ENCODE measurements at regions of chr1 and their contacts with region 1.

Region 1: DNA sequence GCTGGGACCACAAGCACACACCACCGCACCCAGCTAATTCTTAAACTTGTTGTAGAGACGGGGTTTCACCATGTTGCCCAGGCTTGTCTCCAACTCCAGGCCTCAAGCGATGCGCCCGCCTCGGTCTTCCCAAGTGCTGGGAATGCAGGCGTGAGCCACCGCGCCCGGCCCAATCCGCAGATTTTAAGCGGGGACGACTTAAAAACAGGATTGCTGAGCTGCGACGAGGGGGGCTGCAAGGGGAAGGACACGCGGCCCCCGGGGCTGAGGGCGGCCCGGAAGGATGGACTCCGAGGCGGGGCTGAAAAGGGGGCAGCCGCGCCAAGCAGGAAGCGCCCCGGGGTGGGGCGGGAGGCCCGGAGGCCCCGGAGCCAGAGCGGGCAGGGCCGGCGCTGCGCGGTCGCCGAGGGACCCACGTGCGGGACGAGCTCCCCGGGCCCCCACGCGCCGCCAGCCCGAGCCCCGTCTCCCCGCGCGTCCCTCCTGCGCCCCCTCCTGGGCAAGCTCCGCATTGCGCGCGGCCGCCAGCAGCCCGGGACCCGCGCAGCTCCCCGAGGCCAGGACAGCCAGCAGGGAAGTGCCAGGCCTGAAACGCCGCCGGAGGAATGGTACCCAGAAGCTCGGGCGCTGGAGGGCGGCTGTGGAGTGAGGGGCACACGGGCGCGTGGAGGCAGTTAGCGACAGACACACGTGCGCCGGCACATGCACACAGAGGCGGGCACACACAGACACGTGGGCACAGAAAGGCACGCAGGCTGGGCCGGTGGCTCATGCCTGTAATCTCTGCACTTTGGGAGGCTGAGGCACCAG is 5.5 kb upstream of the PRKCZ start:
- DNase-seq: peak; percentile 77
- H3K4me3 Mint-ChIP-seq: no peak overlapping the region
- H3K27ac Mint-ChIP-seq: no peak overlapping the region
- H3K4me1 Mint-ChIP-seq: peaks cover 20% of the 10 kb centered on the region
- H3K27me3 Mint-ChIP-seq: peaks cover 23% of the 10 kb centered on the region

Region 2: GRCh38 chr1:1959840-1960479 is 84.8 kb before region 1 on chr1:
- CTCF ChIA-PET with region 1: interaction called, 28 read pairs
- POLR2A ChIA-PET with region 1: no interaction called
- DNase-seq: peak; percentile 73
- H3K4me3 Mint-ChIP-seq: no peak overlapping the region
- H3K27ac Mint-ChIP-seq: no peak overlapping the region
- H3K4me1 Mint-ChIP-seq: peaks cover under 1% of the 10 kb centered on the region
- H3K27me3 Mint-ChIP-seq: peaks cover 10% of the 10 kb centered on the region

Region 3: GRCh38 chr1:1972976-1973715 is 71.6 kb before region 1 on chr1:
- CTCF ChIA-PET with region 1: no interaction called
- POLR2A ChIA-PET with region 1: no interaction called
- DNase-seq: no peak
- H3K4me3 Mint-ChIP-seq: no peak overlapping the region
- H3K27ac Mint-ChIP-seq: no peak overlapping the region
- H3K4me1 Mint-ChIP-seq: no peaks in the 10 kb centered on the region
- H3K27me3 Mint-ChIP-seq: no peaks in the 10 kb centered on the region

Region 4: DNA sequence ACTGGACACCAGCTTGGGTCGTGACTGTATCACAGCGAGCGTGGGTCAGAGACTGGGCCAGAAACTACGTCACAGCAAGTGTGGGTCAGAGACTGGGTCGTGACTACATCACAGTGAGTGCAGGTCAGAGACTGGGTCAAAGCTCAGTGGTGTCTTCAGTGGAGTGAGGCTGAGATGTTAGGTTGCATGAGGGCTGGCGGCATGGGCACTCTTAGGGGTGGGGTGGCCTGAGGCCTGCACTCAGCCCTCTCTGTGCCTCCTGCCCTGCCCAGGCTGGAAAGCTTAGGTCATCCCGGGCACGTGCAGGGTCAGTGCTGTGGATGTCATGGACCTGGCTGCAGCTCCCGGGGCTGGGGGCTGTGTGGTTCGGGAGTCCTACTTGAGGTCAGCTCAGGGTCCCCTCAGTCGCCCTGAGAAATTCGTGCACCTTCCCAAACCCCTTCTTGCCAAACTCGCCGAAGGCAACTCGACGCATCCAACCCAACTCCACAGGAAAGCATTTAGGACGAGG is 60.1 kb before region 1 on chr1:
- CTCF ChIA-PET with region 1: no interaction called
- POLR2A ChIA-PET with region 1: no interaction called
- DNase-seq: no peak
- H3K4me3 Mint-ChIP-seq: no peak overlapping the region
- H3K27ac Mint-ChIP-seq: no peak overlapping the region
- H3K4me1 Mint-ChIP-seq: no peaks in the 10 kb centered on the region
- H3K27me3 Mint-ChIP-seq: peaks cover 5% of the 10 kb centered on the region

Region 5: DNA sequence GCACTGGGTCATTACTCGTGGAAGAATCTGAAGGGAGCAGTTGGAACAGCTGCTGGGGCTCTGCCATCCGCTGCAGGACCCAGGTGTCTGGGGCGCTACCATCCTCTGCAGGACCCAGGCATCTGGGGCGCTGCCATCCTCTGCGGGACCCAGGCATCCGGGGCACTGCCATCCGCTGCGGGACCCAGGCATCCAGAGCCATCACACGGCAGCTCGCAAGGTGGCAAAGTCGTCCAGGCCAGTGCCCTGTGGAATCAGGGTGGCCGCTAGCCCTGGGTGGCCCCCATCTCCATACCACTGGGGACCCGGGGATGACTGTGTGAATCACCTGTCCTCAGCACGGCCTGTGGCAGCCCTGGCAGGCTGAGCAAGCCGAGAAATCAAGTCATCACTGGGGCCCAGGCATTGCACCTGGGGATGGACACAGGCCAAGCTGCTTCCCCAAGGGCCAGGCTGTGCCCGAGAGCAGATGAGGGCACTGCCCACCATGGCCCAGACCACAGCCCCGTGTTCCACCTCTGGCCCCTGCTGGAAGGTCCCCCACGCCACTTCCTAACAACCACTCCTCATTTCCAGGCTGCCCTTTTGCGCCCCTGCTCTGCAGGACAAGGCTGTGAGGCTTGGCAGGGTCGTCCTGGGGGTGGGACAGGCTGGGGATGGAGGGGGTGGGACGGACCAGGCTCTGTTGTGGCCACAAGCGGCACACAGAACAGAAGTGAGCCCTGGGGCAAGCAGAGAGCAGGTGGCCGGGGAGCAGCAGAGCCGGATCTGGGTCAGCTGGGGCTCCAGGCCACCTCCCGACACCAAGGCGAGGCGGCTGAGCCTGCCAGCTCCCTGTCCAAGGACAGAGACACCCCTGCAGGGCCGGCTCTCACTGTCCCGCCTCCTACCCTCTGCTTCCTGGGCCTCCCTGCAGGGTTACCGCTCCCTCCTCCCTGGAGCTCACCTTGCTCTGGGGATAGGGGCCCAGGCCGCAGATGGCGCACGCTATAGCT is 12.9 kb before region 1 on chr1:
- CTCF ChIA-PET with region 1: interaction called, 10 read pairs
- POLR2A ChIA-PET with region 1: no interaction called
- DNase-seq: no peak
- H3K4me3 Mint-ChIP-seq: no peak overlapping the region
- H3K27ac Mint-ChIP-seq: no peak overlapping the region
- H3K4me1 Mint-ChIP-seq: no peaks in the 10 kb centered on the region
- H3K27me3 Mint-ChIP-seq: no peaks in the 10 kb centered on the region

Region 6: DNA sequence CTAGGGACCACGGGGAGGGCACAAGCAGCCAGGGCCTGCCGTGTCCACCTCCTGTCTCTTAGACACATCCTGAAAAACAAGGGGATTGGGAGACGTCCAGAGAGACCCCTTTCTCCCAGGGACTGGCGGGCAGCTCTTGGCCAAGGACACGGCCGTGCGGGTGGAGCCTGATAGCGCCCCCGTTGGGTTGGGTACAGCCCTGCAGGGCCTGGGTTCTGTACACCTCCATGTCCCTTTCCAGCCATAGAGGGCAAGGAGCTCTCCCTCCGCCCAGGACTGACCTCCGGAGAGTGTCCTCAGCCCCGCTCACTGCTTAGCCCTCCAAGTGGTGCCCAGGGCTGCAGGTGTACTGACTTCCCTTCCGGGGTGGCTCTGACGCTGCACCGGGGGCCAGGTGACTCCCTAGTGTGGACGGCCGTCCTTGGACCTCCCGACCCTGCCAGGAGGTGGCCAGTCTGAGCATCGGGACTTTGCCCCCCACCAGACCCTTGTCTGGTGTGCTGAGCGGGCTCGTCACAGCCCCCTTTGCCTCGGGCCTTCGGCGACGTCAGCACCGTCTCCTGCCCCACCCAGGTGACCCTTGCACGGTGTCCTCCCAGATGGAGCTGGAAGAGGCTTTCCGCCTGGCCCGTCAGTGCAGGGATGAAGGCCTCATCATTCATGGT is 11.3 kb after region 1 on chr1:
- CTCF ChIA-PET with region 1: interaction called, 14 read pairs
- POLR2A ChIA-PET with region 1: no interaction called
- DNase-seq: no peak
- H3K4me3 Mint-ChIP-seq: no peak overlapping the region
- H3K27ac Mint-ChIP-seq: no peak overlapping the region
- H3K4me1 Mint-ChIP-seq: peaks cover 3% of the 10 kb centered on the region
- H3K27me3 Mint-ChIP-seq: no peaks in the 10 kb centered on the region

Measured in activated CD4-positive, alpha-beta memory T cell treated with anti-CD3 and anti-CD28 coated beads, Interleukin-2, amount 10 ng/mL, durations not matched to agents 7 days and 5 days (primary cell).